ENCODE measurements at regions of chr11 and their contacts with region 1.

Region 1: DNA sequence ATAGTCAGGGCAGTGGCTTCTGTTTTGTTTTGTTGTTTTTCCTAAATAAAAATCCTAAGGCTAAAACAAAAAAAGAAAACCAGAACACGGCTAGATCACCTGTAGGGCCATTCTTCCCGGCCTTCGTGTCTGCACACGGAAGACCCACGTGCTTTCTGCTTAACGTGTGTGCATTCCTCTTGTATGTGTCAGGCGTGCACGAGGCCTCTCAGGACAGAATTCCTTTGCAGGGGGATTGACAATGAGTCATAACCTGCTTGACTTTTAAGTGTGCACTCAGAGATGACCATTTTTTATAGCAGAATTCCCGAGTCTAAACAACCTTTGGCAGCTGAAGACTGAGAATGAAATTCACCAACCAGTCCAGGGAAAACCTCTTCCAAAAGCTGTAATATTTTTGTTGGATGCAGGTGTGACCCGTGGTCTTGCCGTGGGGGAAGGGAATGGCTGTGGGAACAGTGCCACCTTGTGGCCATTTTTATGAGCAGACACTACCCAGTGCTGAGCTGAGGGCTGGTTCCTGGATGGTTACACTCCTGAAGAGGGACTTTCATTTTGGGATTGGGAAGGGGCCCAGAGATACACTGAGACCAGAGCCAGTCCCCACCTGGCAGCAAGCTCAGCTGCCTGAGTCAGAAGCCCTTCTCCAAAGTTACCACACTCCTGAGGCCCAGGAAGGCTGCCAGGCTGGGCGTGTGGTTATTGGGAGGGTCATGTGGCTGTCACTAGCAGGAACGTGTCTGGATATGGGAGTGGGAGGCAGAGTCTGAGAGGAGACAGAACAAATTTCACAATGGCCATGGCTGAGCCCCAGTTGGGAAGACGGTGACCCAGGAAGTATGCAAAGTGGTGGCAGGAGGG is 35.8 kb upstream of the DKK3 start:
- DNase-seq: peak; percentile 79
- H3K4me3 Mint-ChIP-seq: no peak overlapping the region
- H3K27ac Mint-ChIP-seq: no peak overlapping the region
- H3K4me1 Mint-ChIP-seq: peaks cover 3% of the 10 kb centered on the region
- H3K27me3 Mint-ChIP-seq: peaks cover 8% of the 10 kb centered on the region

Region 2: DNA sequence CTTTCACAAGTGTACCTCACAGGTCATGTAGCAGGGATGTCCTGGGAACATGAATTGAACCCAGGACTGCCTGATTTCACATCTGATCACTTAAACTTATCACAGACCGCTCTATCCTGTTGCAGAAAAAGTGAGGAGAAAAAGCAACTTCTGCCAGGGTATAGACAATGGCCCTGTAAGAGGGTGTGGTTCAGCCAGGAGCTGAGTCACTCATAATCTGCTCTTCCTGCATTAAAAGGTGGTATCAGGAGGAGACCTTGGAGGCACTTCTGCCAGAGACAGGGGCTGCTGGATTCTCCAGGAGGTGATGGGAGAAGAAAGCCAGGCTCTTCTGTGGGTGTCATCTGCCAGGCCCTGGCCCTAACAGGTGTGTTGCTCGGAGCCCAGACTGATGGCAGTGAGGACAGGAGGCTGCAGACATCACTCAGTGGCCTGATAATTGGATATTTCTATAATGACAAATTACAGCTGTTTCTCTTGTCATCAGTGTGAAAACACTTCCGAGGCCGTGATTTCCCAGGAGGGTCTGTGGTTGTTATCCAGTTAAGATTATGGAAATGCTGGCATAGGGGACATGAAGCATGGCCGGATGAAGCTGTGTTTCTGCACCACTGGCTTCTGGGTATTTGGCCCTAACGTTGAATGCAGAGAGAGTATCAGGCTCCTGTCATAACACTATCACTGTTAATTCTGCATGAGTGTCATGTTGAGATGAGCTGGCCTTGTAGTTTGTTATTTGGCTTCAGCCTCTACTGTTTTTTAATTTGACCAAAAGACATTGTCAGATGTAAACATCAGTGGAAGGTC is 1061.3 kb before region 1 on chr11:
- CTCF ChIA-PET with region 1: no interaction called
- intact Hi-C with region 1: no loop called
- DNase-seq: no peak
- H3K4me3 Mint-ChIP-seq: no peak overlapping the region
- H3K27ac Mint-ChIP-seq: no peak overlapping the region
- H3K4me1 Mint-ChIP-seq: no peaks in the 10 kb centered on the region
- H3K27me3 Mint-ChIP-seq: no peaks in the 10 kb centered on the region

Region 3: GRCh38 chr11:11036848-11037732 is 1007.1 kb before region 1 on chr11:
- CTCF ChIA-PET with region 1: no interaction called
- intact Hi-C with region 1: loop called (anchors 10 kb)
- DNase-seq: peak; percentile 59
- H3K4me3 Mint-ChIP-seq: no peak overlapping the region
- H3K27ac Mint-ChIP-seq: no peak overlapping the region
- H3K4me1 Mint-ChIP-seq: peaks cover 8% of the 10 kb centered on the region
- H3K27me3 Mint-ChIP-seq: no peaks in the 10 kb centered on the region

Region 4: DNA sequence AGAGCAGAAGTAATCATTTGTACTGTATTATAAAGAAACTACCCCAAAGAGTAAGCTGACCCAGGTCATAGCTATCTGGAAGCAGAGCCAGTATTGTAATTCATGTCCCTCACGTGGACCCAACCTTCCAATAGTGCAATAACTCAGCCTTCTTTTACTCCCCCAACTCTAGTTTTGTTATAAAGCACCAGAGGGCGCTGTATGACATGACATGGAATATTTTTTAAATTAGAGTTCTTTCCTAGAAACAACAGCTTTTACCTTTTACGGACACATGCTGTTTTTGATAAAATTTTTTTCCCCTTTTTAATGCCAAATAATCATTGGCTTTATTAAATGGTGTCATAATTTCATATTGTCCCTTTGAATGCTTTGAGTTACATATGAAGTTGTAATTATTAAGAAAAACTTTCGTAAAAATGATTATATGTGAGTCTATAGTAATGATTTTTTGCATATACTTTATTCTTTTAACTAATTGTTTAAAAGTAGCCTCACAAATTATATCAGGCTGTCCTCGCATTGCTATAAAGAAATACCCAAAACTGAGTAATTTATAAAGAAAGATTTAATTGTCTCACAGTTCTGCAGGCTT is 112.6 kb before region 1 on chr11:
- CTCF ChIA-PET with region 1: interaction called, 5 read pairs
- intact Hi-C with region 1: loop called (anchors 1 kb)
- DNase-seq: peak; percentile 10
- H3K4me3 Mint-ChIP-seq: no peak overlapping the region
- H3K27ac Mint-ChIP-seq: no peak overlapping the region
- H3K4me1 Mint-ChIP-seq: no peaks in the 10 kb centered on the region
- H3K27me3 Mint-ChIP-seq: no peaks in the 10 kb centered on the region

Region 5: DNA sequence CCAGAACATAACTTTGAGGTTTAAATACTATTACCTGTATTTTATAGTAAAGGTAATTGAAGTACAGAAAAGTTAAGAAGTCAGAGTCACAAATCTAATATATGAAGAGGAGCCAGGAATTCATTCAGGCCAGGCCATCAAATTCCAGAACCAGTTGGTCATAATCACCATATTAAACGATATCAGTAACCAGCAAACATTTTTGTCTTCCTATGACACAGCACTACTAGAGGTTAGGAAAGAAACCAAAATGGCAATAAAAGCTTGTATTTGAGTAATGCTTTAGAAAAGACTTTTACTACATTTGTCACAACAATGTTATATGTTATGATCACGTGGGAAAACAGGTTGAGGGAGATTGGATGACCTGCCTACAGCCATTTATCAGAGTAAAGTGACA is 98.0 kb before region 1 on chr11:
- CTCF ChIA-PET with region 1: interaction called, 10 read pairs
- intact Hi-C with region 1: no loop called
- DNase-seq: no peak
- H3K4me3 Mint-ChIP-seq: no peak overlapping the region
- H3K27ac Mint-ChIP-seq: no peak overlapping the region
- H3K4me1 Mint-ChIP-seq: no peaks in the 10 kb centered on the region
- H3K27me3 Mint-ChIP-seq: no peaks in the 10 kb centered on the region

Region 6: GRCh38 chr11:12061851-12062560 is 17.8 kb after region 1 on chr11:
- CTCF ChIA-PET with region 1: interaction called, 33 read pairs
- intact Hi-C with region 1: no loop called
- DNase-seq: no peak
- H3K4me3 Mint-ChIP-seq: no peak overlapping the region
- H3K27ac Mint-ChIP-seq: no peak overlapping the region
- H3K4me1 Mint-ChIP-seq: no peaks in the 10 kb centered on the region
- H3K27me3 Mint-ChIP-seq: no peaks in the 10 kb centered on the region

Region 7: GRCh38 chr11:12281571-12282478 is 237.6 kb after region 1 on chr11:
- CTCF ChIA-PET with region 1: interaction called, 417 read pairs
- intact Hi-C with region 1: loop called (anchors 1 kb)
- DNase-seq: peak; percentile 87
- H3K4me3 Mint-ChIP-seq: no peak overlapping the region
- H3K27ac Mint-ChIP-seq: no peak overlapping the region
- H3K4me1 Mint-ChIP-seq: peaks cover 2% of the 10 kb centered on the region
- H3K27me3 Mint-ChIP-seq: no peaks in the 10 kb centered on the region